ENCODE measurements at regions of chr3 and their contacts with region 1.

Region 1: GRCh38 chr3:167032261-167032876 is 347.7 kb downstream of the ZBBX start:
- DNase-seq: peak; percentile 61
- ATAC-seq: peak; percentile 71
- H3K4me3 ChIP-seq: no peak overlapping the region
- H3K27ac ChIP-seq: no peak overlapping the region
- H3K4me1 ChIP-seq: no peaks in the 10 kb centered on the region
- H3K27me3 ChIP-seq: no peaks in the 10 kb centered on the region
- CTCF ChIP-seq: peak; percentile 41 to 71 (median 46); a peak in 4 of 6 replicates
- POLR2A ChIP-seq: no peak
- RAD21 ChIP-seq: peak; percentile 76

Region 2: GRCh38 chr3:165254812-165255211 is 1777.6 kb before region 1 on chr3:
- CTCF ChIA-PET with region 1: interaction called, 7 read pairs
- POLR2A ChIA-PET with region 1: no interaction called
- RAD21 ChIA-PET with region 1: no interaction called
- intact Hi-C with region 1: loop called (anchors 2 kb)
- DNase-seq: peak; percentile 39
- ATAC-seq: peak; percentile 84
- H3K4me3 ChIP-seq: no peak overlapping the region
- H3K27ac ChIP-seq: no peak overlapping the region
- H3K4me1 ChIP-seq: peaks cover 0 to 6% of the 10 kb centered on the region in 2 experiments; a peak in 1 of 4 replicates
- H3K27me3 ChIP-seq: no peaks in the 10 kb centered on the region
- CTCF ChIP-seq: peak; percentile 33 to 58 (median 35); a peak in 4 of 6 replicates
- POLR2A ChIP-seq: no peak
- RAD21 ChIP-seq: peak; percentile 76

Region 3: GRCh38 chr3:165854696-165855095 is 1177.7 kb before region 1 on chr3:
- CTCF ChIA-PET with region 1: no interaction called
- POLR2A ChIA-PET with region 1: no interaction called
- RAD21 ChIA-PET with region 1: no interaction called
- intact Hi-C with region 1: loop called (anchors 5 kb)
- DNase-seq: no peak
- ATAC-seq: no peak
- H3K4me3 ChIP-seq: no peak overlapping the region
- H3K27ac ChIP-seq: no peak overlapping the region
- H3K4me1 ChIP-seq: no peaks in the 10 kb centered on the region
- H3K27me3 ChIP-seq: no peaks in the 10 kb centered on the region
- CTCF ChIP-seq: peak; percentile 29 to 73 (median 33); a peak in 5 of 6 replicates
- POLR2A ChIP-seq: no peak
- RAD21 ChIP-seq: peak; percentile 55

Region 4: DNA sequence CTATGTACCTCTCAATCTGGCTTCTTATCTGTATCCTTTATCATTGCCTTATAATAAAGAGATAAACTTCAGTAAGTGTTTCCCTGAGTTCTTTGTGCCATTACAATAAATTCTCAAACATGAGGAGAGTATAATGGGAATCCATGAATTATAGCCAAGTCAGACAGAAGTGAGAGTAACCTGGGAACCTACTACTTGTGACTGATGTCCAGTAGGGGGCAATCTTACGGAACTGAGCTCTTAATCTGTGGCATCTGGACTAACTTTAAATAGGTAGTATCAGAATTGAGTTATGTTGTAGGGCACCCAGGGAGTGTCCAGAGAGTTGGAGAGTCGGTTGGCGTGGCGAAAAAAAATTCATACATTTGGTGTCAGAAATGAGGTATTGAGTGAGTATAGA is 194.8 kb before region 1 on chr3:
- CTCF ChIA-PET with region 1: interaction called, 16 read pairs
- POLR2A ChIA-PET with region 1: no interaction called
- RAD21 ChIA-PET with region 1: no interaction called
- intact Hi-C with region 1: no loop called
- DNase-seq: peak; percentile 37
- ATAC-seq: peak; percentile 94
- H3K4me3 ChIP-seq: no peak overlapping the region
- H3K27ac ChIP-seq: no peak overlapping the region
- H3K4me1 ChIP-seq: no peaks in the 10 kb centered on the region
- H3K27me3 ChIP-seq: no peaks in the 10 kb centered on the region
- CTCF ChIP-seq: peak in 2 of 3 experiments; percentile 58 to 75; a peak in 4 of 6 replicates
- POLR2A ChIP-seq: no peak
- RAD21 ChIP-seq: peak; percentile 40

Measured in HCT116 (cell line).